H1 (cell line): ENCODE measurements at regions of chr7 and their contacts with region 1.

Region 1: DNA sequence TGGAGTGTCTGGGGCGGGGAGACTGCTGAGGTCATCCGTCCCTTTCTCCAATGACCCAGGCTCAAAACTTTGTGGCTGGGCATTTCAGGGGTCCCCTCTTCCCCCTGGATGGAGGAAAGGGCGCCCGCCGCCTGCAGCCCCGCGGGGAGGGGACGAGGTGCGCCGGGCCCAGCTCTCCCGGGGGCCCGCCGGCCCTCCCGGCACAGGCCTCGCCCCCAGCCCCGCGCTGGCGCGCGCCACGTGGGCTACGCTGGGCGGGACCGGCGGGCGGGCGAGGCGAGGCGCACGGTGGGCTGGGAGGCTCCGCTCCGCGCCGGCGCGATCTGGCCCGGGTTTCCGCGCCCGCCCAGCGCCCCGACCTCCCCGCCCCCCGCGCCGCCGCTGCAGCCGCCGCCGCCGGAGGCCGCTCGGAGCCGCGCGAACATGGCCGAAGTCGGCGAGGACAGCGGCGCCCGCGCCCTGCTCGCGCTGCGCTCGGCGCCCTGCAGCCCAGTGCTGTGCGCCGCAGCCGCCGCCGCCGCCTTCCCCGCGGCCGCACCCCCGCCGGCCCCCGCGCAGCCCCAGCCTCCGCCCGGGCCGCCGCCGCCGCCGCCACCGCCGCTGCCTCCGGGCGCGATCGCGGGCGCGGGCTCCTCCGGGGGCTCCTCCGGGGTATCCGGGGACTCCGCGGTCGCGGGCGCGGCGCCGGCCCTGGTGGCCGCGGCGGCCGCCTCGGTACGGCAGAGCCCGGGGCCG is at the start of gene FOXK1:
- DNase-seq: peak in 1 of 2 experiments; percentile 80
- H3K4me3 ChIP-seq: peak within 1 kb of the TSS; percentile 53 to 72 (median 58)
- H3K27ac ChIP-seq: no peak within 1 kb of the TSS
- H3K4me1 ChIP-seq: peaks cover 0 to 6% (median 5%) of the 10 kb centered on the region in 4 experiments; a peak in 5 of 7 replicates
- H3K27me3 ChIP-seq: peaks cover 3 to 31% (median 15%) of the 10 kb centered on the region in 4 experiments
- CTCF ChIP-seq: no peak
- EP300 ChIP-seq: no peak
- POLR2A ChIP-seq: no peak
- RAD21 ChIP-seq: no peak; a peak in 1 of 4 replicates
- total RNA-seq, gene FOXK1: 8.5 and 8.6 TPM in 2 replicates

Region 2: GRCh38 chr7:4641667-4642467 is 40.2 kb before region 1 on chr7:
- CTCF ChIA-PET with region 1: no interaction called
- POLR2A ChIA-PET with region 1: interaction called, 18 read pairs
- DNase-seq: peak; percentile 80 to 85
- H3K4me3 ChIP-seq: peak overlapping the region; percentile 23 to 59 (median 24); a peak in 5 of 8 replicates
- H3K27ac ChIP-seq: peak overlapping the region; percentile 63; the same call in 1 of the 2 replicates
- H3K4me1 ChIP-seq: no peaks in the 10 kb centered on the region
- H3K27me3 ChIP-seq: no peaks in the 10 kb centered on the region; a peak in 1 of 7 replicates
- CTCF ChIP-seq: peak in 2 of 3 experiments; percentile 37 to 49; a peak in 2 of 4 replicates
- EP300 ChIP-seq: no peak; a peak in 1 of 3 replicates
- POLR2A ChIP-seq: peak in 1 of 2 experiments; percentile 21; a peak in 1 of 3 replicates
- RAD21 ChIP-seq: no peak; a peak in 1 of 4 replicates